Common myeloid progenitor, CD34-positive (primary cell): ENCODE measurements at regions of chr11 and their contacts with region 1.

Region 1: DNA sequence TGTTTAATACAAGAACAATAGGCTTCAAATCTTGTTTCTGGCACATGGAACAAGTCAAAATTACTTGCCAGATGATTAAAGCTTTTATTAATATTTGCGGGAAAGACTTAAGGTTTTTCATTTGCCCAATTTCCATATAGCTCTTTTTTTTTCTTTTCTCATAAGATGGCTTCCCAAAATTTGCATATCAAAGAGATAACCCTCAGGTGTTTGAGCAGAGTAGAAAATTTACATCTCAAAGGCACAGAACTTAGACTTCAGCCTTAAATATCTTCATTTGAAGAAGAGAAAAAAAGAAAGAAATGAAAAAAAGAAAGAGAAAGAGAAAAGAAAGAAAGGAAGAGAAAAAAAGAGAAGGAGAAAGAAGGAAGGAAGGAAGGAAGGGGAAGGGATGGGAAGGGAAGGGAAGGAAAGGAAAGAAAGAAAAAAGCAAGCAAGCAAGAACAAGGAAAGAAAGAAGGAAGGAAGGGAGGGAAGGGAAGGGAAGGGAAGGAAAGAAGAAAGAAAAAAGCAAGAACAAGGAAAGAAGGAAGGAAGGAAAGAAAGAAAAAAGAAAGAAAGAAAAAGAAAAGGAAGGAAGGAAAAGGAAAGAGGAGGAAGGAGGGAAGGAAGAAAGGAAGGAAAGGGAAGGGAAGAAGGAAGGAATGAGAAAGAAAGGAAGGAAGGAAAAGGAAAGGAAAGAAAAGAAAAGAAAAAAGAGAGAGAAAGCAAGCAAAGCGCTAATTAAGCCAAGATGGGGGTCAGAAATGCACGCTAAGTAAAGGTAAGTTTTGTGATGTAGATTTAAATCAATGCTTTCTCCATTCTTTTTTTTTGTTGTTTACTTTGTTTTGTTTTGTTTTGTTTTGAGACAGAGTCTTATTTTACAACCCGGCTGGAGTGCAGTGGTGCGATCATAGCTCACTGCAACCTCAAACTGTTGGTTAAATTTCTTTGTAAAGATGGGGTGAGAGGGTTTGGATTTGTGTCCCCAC is 20.2 kb upstream of the IFITM3 start:
- DNase-seq: no peak
- H3K4me3 ChIP-seq: no peak overlapping the region
- H3K27ac ChIP-seq: no peak overlapping the region
- H3K4me1 ChIP-seq: peaks cover 8 to 23% (median 15%) of the 10 kb centered on the region in 4 experiments
- H3K27me3 ChIP-seq: no peaks in the 10 kb centered on the region

Region 2: DNA sequence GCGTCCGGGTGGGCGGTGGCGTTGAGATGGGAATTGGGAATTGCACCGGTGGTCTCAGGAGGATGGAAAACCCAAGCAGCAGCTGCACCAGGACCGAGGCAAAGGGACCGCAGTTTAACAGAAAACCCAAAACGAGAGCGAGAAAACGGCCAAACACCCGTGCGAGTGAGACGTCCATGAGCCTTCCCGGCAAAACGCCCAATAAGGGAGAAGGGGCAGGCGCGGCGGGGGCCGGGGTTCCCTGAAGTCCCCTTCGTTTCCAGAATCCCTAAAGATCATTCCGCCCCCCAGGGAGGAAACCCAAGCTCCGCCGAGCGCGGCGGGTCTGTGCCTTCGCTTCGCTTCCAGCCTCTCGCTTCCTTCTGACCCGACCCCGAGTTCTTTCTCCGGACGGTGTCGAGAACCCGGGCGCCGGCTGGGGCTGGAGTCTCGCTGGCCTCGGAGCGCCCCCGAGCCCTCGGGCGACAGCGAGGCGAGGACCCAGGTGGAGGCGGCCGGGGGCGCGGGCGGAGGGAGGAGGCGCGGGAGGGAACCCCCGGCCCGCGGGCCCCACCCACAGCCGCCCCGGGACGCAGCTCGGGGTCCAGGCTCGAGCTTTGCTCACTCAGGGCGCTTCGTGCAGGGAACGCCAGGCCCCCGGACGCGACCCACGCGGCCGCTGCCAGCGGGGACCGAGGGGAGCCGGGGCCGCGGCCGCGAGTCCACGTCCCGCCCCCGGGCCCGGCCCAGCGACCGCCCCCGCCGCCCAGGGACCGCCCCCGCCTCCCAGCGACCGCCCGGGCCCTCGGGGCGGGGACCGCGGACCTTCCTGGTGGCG is 52.3 kb before region 1 on chr11 and contains the start of gene PGGHG:
- CTCF ChIA-PET with region 1: no interaction called
- POLR2A ChIA-PET with region 1: no interaction called
- DNase-seq: peak in 1 of 3 donors; percentile 42
- H3K4me3 ChIP-seq: peak within 1 kb of the TSS; percentile 40 to 75 (median 65)
- H3K27ac ChIP-seq: peak within 1 kb of the TSS in 1 of 2 experiments; percentile 43
- H3K4me1 ChIP-seq: peaks cover 0 to 23% (median 17%) of the 10 kb centered on the region in 4 experiments
- H3K27me3 ChIP-seq: peaks cover 0 to 23% (median 13%) of the 10 kb centered on the region in 5 experiments

Region 3: GRCh38 chr11:330694-331357 is 10.0 kb before region 1 on chr11:
- CTCF ChIA-PET with region 1: interaction called, 16 read pairs
- POLR2A ChIA-PET with region 1: no interaction called
- DNase-seq: no peak
- H3K4me3 ChIP-seq: no peak overlapping the region
- H3K27ac ChIP-seq: peak overlapping the region in 1 of 2 experiments; percentile 70
- H3K4me1 ChIP-seq: peaks cover 2 to 73% (median 36%) of the 10 kb centered on the region in 4 experiments
- H3K27me3 ChIP-seq: no peaks in the 10 kb centered on the region

Region 4: GRCh38 chr11:506238-506994 is 165.6 kb after region 1 on chr11:
- CTCF ChIA-PET with region 1: no interaction called
- POLR2A ChIA-PET with region 1: no interaction called
- DNase-seq: peak; percentile 97 to 98 (median 98)
- H3K4me3 ChIP-seq: peak overlapping the region; percentile 48 to 91 (median 79)
- H3K27ac ChIP-seq: peak overlapping the region; percentile 99
- H3K4me1 ChIP-seq: peaks cover 3 to 40% (median 37%) of the 10 kb centered on the region in 4 experiments
- H3K27me3 ChIP-seq: peaks cover 0 to 2% (median 0%) of the 10 kb centered on the region in 5 experiments